ENCODE measurements at regions of chr4 and their contacts with region 1.

Region 1: DNA sequence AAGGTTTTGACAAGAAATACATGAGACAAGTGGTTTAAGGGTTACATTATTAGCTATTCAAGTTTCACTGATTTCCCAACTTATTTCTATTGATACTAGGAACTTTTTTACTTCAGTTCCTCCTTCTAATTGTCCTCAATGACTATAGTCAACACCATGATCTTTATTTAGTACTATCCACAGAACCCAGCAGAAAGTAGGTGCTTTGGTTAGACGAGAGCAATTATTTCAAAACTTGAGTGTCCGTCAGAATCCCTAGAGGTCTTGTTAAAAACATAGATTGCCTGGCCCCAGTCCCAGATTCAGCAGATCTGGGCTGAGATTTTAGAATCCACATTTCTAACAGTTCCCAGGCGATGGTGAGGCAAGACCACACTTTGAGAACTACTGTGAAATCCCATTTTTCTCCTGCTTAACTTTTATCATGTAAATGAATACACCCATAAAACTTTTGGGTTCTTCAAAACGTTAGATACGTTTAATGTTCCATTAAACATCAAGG is 17.9 kb downstream of the EXOC1 start:
- DNase-seq: no peak
- ATAC-seq: no peak
- H3K4me3 ChIP-seq: no peak overlapping the region
- H3K27ac ChIP-seq: no peak overlapping the region
- H3K4me1 ChIP-seq: peaks cover 14% of the 10 kb centered on the region
- H3K27me3 ChIP-seq: no peaks in the 10 kb centered on the region
- CTCF ChIP-seq: no peak

Region 2: GRCh38 chr4:55444827-55445226 is 426.5 kb before region 1 on chr4:
- intact Hi-C with region 1: loop called in 1 of 2 experiments (anchors 10 kb)
- DNase-seq: no peak
- ATAC-seq: peak in 1 of 4 donors; percentile 54
- H3K4me3 ChIP-seq: no peak overlapping the region
- H3K27ac ChIP-seq: no peak overlapping the region
- H3K4me1 ChIP-seq: no peaks in the 10 kb centered on the region
- H3K27me3 ChIP-seq: no peaks in the 10 kb centered on the region
- CTCF ChIP-seq: no peak

Region 3: GRCh38 chr4:56255820-56256219 is 384.5 kb after region 1 on chr4:
- intact Hi-C with region 1: no loop called
- DNase-seq: no peak
- ATAC-seq: no peak
- H3K4me3 ChIP-seq: no peak overlapping the region
- H3K27ac ChIP-seq: no peak overlapping the region
- H3K4me1 ChIP-seq: no peaks in the 10 kb centered on the region
- H3K27me3 ChIP-seq: peaks cover 0 to 2% (median 0%) of the 10 kb centered on the region in 3 donors
- CTCF ChIP-seq: no peak